ENCODE measurements at regions of chr19 and their contacts with region 1.

Region 1: GRCh38 chr19:4199699-4200293 is 17.3 kb downstream of the ANKRD24 start:
- DNase-seq: no peak
- H3K4me3 ChIP-seq: no peak overlapping the region
- H3K27me3 ChIP-seq: peaks cover 4% of the 10 kb centered on the region
- CTCF ChIP-seq: no peak

Region 2: GRCh38 chr19:3899531-3900292 is 300.1 kb before region 1 on chr19:
- CTCF ChIA-PET with region 1: no interaction called
- POLR2A ChIA-PET with region 1: no interaction called
- DNase-seq: no peak
- H3K4me3 ChIP-seq: no peak overlapping the region
- H3K27me3 ChIP-seq: no peaks in the 10 kb centered on the region
- CTCF ChIP-seq: no peak

Region 3: GRCh38 chr19:3964260-3965204 is 235.3 kb before region 1 on chr19:
- CTCF ChIA-PET with region 1: no interaction called
- POLR2A ChIA-PET with region 1: no interaction called
- DNase-seq: no peak
- H3K4me3 ChIP-seq: no peak overlapping the region
- H3K27me3 ChIP-seq: no peaks in the 10 kb centered on the region
- CTCF ChIP-seq: no peak

Region 4: DNA sequence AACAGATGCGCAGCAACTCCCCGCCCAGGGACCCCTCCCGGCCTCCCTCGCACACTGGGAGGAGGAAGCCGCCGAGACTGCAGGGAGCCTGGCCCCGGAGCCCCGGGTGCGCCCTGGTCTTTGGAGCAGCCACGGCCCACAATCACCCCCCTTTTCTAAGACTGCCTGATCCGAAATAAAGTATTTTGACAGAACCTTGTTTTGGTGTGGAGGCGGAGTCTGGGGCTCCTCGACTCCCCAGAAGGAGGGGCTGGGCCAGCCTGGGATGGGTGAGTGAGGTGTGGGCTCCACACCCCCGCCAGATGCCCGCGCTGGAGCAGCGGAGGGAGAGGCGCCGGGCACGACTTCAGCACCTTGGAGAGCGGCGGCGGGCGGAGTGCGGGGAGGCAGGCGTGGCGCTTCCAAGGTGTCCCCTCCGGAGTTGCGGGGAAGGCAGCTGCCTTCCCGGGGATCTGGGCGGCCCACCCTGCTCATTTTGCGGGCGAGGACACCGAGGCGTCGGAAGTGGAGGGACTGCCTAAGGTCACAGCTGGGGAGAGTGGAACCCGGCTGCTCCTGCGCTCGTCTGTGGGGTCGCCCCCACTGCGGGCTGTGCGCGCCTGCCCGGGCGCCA is 26.8 kb before region 1 on chr19:
- CTCF ChIA-PET with region 1: no interaction called
- POLR2A ChIA-PET with region 1: no interaction called
- DNase-seq: no peak
- H3K4me3 ChIP-seq: no peak overlapping the region
- H3K27me3 ChIP-seq: peaks cover 3% of the 10 kb centered on the region
- CTCF ChIP-seq: no peak

Region 5: DNA sequence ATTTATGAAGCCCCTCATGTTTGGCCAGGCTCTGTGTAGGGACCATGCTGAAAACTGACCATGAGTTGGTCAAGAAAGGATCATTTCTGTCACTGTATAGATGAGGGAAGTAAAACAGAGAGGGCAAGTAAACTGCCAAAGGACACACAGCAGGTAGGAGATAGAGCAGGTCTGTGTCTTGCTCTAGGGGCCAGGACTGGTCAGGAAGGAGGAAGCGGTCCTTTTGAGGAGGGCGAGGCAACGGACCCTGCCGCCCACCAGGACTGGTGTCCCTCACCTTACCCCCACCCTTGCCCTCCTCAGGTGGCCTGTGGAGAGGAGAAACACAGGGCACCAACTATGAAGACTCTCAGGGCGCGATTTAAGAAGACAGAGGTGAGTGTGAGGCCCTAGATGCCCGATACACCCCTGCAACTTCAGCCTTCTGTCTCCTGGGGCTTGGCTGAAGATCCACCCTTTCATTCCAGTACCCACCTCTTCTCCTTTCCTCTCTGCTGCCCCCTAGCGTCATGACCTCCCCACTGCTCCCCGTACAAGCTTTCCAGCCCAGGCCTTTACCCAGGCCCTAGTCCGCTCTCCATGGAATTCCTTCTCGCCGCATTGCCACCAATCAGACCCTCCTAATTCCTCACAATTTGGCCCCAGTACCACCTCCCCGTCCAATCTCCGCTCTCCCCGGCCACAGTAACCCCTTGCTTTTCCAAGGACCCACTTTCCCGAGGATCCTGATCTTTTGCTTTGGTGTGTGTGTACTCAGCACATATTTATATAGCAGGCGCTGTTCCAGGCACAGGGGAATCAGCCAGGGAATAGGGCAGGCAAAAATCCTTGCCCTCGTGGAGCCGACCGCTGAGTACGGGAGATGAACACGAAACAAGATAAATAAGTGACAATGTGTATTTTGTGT is 13.5 kb before region 1 on chr19:
- CTCF ChIA-PET with region 1: interaction called, 19 read pairs
- POLR2A ChIA-PET with region 1: no interaction called
- DNase-seq: peak; percentile 5
- H3K4me3 ChIP-seq: no peak overlapping the region
- H3K27me3 ChIP-seq: no peaks in the 10 kb centered on the region
- CTCF ChIP-seq: peak; percentile 89

Measured in BJ (cell line).